Activated CD4-positive, alpha-beta memory T cell treated with anti-CD3 and anti-CD28 coated beads for 36 hours (primary cell): ENCODE measurements at regions of chr3 and their contacts with region 1.

Region 1: GRCh38 chr3:171269542-171269941 is 190.7 kb downstream of the TNIK start:
- DNase-seq: no peak
- H3K4me3 Mint-ChIP-seq: peak overlapping the region; percentile 17
- H3K27ac Mint-ChIP-seq: peak overlapping the region; percentile 6
- H3K4me1 Mint-ChIP-seq: peaks cover 81% of the 10 kb centered on the region
- H3K27me3 Mint-ChIP-seq: no peaks in the 10 kb centered on the region

Region 2: DNA sequence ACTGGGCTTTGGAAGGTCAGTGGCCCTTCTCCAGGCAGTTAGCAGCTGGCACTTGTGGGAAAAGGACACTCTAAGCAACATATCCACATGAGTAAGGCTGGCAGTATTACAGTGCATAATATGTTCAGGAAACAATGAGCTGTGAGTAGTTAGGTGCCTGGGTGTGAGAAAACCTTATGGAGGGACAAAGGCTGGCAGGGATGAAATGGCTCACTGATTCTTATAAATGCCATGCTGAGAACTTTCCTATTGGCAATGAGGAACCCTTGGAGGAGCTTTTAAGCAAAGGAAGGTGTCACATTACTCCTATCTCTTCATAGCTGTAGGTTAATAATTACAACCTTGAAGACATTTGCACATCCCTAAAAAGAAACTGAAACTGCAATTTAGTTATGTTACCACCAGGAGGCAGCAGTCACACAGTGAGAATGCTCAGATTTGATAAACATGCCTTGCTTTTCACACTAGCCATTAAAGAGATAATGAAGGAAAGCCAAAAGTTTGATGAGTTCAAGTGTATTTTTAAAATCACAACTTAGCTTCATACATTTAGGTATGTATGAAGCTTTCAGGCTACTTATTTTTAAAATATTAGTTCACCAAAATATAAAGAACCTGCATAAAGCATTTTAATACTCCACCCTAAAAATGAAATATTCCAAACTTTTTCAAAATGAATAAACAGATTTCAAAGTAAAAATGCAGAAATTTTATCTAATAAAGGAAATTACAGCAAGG is 106.4 kb before region 1 on chr3:
- CTCF ChIA-PET with region 1: no interaction called
- POLR2A ChIA-PET with region 1: no interaction called
- intact Hi-C with region 1: loop called (anchors 1 kb)
- DNase-seq: no peak
- H3K4me3 Mint-ChIP-seq: no peak overlapping the region
- H3K27ac Mint-ChIP-seq: no peak overlapping the region
- H3K4me1 Mint-ChIP-seq: peaks cover 24% of the 10 kb centered on the region
- H3K27me3 Mint-ChIP-seq: no peaks in the 10 kb centered on the region

Region 3: DNA sequence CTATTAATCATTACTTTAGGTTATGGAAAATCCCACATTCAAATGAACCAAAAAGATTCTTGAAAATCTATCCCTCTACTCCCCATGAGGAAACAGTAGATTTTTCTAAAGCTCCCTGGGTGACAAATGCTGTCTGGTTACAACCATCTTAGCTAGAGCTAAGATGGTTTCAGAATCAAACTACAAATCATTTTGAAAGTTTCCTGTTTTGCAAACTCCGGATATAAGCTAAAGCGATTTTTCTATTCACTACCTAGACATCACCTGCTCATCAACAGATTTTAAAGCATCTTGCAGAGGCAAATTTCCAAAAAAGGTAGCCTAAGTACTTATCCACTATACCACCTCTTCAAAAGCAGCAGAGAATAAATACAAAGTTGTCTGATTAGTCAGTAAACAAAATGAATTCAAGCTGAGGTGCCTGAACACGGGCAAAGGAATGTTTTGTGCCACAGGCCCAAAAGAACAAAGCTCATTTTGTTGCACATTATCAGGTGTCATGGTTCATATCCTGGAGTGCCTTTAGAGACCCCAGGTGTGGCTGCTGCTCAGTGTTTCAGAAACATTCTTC is 14.2 kb before region 1 on chr3:
- CTCF ChIA-PET with region 1: interaction called, 4 read pairs
- POLR2A ChIA-PET with region 1: interaction called, 4 read pairs
- intact Hi-C with region 1: loop called (anchors 1 kb)
- DNase-seq: no peak
- H3K4me3 Mint-ChIP-seq: peak overlapping the region; percentile 54
- H3K27ac Mint-ChIP-seq: peak overlapping the region; percentile 82
- H3K4me1 Mint-ChIP-seq: peaks cover 89% of the 10 kb centered on the region
- H3K27me3 Mint-ChIP-seq: no peaks in the 10 kb centered on the region

Region 4: GRCh38 chr3:171284308-171285075 is 14.9 kb after region 1 on chr3:
- CTCF ChIA-PET with region 1: interaction called, 5 read pairs
- POLR2A ChIA-PET with region 1: no interaction called
- intact Hi-C with region 1: loop called (anchors 1 kb)
- DNase-seq: peak; percentile 31
- H3K4me3 Mint-ChIP-seq: peak overlapping the region; percentile 24
- H3K27ac Mint-ChIP-seq: peak overlapping the region; percentile 34
- H3K4me1 Mint-ChIP-seq: peaks cover 57% of the 10 kb centered on the region
- H3K27me3 Mint-ChIP-seq: no peaks in the 10 kb centered on the region

Region 5: GRCh38 chr3:171347301-171348039 is 77.9 kb after region 1 on chr3:
- CTCF ChIA-PET with region 1: no interaction called
- POLR2A ChIA-PET with region 1: no interaction called
- intact Hi-C with region 1: loop called (anchors 5 kb)
- DNase-seq: no peak
- H3K4me3 Mint-ChIP-seq: no peak overlapping the region
- H3K27ac Mint-ChIP-seq: peak overlapping the region; percentile 70
- H3K4me1 Mint-ChIP-seq: peaks cover 66% of the 10 kb centered on the region
- H3K27me3 Mint-ChIP-seq: no peaks in the 10 kb centered on the region

Region 6: DNA sequence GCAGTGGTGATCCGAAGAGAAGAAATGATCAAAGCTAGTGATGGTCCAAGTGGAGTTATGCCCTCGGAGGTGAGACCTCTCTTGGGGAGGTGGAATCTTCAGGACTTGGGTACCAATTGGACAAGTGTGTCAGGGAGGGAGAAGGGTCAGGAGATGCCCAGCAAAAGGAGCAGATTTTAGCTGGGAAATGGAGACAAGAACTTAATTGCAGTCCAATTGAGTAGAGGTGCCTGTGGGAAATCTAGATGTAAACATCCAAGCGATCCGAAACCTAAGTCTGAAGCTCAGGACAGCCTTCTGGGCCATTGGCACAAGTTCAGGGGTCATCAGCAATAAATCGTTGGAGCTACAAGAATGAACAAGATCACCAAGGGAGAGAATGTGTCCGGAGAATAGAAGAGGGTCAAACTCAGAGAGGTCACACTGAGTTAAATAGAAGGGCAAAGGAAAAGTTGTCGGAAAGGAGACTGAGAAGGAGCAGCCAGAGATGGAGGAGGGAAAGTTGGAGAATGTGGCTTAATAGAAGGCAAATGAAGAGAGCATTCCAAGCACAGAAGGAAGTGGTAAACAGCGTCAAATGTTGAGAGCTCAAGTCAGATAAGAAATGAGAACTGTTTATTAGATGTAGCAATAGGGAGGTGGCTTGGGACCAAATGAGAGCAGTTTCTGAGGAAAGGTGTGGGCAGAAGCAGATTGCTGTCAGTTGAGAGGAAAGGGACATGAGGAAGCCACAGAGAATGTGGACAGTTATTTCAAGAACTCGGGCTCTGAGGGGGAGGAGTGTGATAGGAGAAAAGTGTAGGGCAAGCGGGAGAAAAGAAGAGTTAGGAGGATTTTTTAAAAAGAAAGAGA is 705.7 kb after region 1 on chr3:
- CTCF ChIA-PET with region 1: no interaction called
- POLR2A ChIA-PET with region 1: no interaction called
- intact Hi-C with region 1: no loop called
- DNase-seq: no peak
- H3K4me3 Mint-ChIP-seq: no peak overlapping the region
- H3K27ac Mint-ChIP-seq: no peak overlapping the region
- H3K4me1 Mint-ChIP-seq: peaks cover 1% of the 10 kb centered on the region
- H3K27me3 Mint-ChIP-seq: peaks cover 2% of the 10 kb centered on the region